A549 (cell line): ENCODE measurements at regions of chr9 and their contacts with region 1.

Region 1: DNA sequence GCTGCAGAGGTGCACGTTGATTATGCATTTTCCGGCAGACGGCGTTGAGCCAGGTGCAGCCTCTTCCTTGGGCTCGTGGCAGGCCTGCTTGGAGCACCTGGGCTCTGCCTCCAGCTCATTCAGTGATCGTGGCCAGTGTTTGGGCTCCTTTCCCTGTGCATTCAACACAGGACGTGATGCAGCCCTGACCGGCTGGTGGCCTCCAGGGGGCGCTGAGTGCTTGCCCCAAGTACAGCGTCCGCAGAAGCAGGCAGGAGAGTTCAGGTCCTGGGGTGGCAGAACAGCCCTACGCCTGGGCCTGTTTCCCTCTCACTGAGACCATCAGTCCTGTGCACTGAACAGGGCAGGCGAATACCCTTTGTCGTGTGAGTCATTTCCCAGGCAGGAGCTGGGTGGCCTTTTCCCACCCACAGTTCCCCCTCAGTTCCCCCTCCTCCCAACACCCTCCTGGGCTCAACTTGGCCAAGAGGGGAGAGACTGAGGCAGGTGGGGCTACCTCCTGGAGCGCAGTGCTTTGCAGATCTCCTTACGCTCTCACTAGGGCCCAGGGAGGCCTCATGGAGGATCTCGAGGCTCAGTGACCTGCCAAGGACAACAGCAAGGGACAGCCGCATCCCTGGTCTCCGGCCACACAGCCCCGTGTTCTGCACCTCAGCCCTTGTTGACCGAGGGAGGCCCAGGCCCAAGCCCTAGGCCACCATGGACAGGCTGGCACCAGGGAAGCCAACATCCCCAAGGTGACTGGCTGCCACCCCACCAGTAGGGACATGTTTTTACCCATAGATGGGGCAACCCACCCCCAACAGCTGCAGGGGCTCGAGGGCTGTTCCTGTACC is 52.9 kb downstream of the LRSAM1 start:
- DNase-seq: peak; percentile 48 to 89
- ATAC-seq: peak; percentile 69 to 87
- H3K4me3 ChIP-seq: no peak overlapping the region
- H3K27ac ChIP-seq: peak overlapping the region; percentile 26 to 79; a peak in 4 of 6 replicates
- H3K4me1 ChIP-seq: peaks cover 24% of the 10 kb centered on the region
- CTCF ChIP-seq: peak; percentile 84
- EP300 ChIP-seq: no peak
- POLR2A ChIP-seq: no peak
- RAD21 ChIP-seq: peak; percentile 94 to 96

Region 2: DNA sequence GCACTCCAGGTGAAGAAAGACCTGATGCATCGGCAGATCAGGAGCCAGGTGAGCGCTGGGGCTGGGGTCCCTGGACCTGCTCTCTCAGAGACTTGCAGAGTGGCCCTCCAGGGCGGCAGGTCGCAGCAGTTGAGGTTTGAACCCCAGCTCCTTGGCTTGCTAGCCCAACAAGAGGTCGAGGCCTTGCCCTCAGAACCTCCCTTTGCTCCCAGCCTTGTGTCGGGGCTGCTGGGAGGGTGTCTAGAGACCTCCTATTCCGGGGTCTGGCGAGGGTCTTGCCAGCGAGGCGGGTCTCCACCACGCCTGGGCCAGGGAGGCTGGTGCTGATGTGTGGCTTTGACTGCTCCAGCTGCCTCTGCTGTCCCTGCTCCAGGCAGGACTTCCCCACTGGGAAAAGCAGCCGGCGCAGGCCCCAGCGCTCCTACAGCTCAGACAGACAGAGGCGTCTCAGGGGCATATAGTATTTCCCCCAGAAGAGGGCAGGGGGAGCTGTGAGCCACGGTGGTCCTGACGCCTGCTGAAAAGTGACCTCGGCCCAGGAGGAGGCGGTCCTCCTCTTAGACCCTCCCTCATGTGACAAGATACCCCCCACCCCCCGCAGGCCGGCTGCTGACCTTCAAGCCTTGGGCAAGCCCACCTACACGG is 14.6 kb before region 1 on chr9:
- CTCF ChIA-PET with region 1: interaction called, 69 read pairs
- POLR2A ChIA-PET with region 1: no interaction called
- DNase-seq: no peak
- ATAC-seq: peak in 1 of 2 experiments; percentile 60; a peak in 3 of 6 replicates
- H3K4me3 ChIP-seq: no peak overlapping the region
- H3K27ac ChIP-seq: no peak overlapping the region
- H3K4me1 ChIP-seq: no peaks in the 10 kb centered on the region
- CTCF ChIP-seq: no peak
- EP300 ChIP-seq: no peak
- POLR2A ChIP-seq: no peak
- RAD21 ChIP-seq: no peak

Region 3: DNA sequence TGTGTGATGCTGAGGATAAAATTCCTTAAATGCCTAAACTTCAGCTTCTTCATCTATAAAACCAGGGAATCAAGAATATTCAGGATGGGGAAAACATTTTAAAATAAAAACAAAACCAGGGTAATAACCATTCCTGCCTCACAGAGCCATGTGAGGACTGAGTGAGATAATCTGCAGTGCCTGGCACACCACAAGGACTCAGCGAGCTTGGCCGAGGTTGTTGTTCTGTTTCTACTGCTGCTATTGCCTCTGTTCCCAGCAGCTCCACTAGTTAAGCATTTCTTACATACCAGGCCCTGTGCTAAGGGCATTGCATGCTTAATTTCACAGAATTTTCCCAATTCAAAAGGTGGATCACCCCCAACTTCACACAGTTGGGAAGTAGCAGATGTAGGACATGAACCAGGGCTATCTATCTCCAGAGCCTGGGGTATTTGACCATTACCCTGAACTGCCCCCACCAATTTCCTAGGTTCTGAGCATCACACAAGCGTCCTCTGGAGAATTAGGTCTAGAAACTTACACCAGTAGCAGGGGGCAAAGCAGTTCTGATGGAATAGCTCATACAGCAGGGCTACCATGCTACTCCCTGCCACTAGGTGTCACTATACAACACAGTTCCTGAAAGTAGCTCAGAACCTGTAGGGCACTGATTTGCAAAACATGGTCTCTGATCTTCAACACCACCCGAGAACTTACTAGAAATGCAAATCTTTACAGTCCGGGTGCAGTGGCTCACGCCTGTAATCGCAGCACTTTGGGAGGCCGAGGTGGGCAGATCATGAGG is 21.4 kb after region 1 on chr9:
- CTCF ChIA-PET with region 1: interaction called, 139 read pairs
- POLR2A ChIA-PET with region 1: no interaction called
- DNase-seq: peak in 1 of 2 experiments; percentile 71
- ATAC-seq: 0 out of 6 replicates have a peak, but pooled peaks of 1 of the 2 experiments have one; percentile 12
- H3K4me3 ChIP-seq: no peak overlapping the region
- H3K27ac ChIP-seq: peak overlapping the region in 1 of 2 experiments; percentile 77; a peak in 2 of 6 replicates
- H3K4me1 ChIP-seq: peaks cover 31% of the 10 kb centered on the region
- CTCF ChIP-seq: peak; percentile 37
- EP300 ChIP-seq: no peak
- POLR2A ChIP-seq: no peak
- RAD21 ChIP-seq: peak; percentile 36 to 60; a peak in 3 of 5 replicates

Region 4: GRCh38 chr9:127545196-127546124 is 41.3 kb after region 1 on chr9:
- CTCF ChIA-PET with region 1: interaction called, 80 read pairs
- POLR2A ChIA-PET with region 1: interaction called, 3 read pairs
- DNase-seq: peak; percentile 93 to 94
- ATAC-seq: peak; percentile 76 to 87
- H3K4me3 ChIP-seq: peak overlapping the region; percentile 11; the same call in 1 of the 3 replicates
- H3K27ac ChIP-seq: peak overlapping the region; percentile 94 to 96
- H3K4me1 ChIP-seq: peaks cover 91% of the 10 kb centered on the region
- CTCF ChIP-seq: no peak
- EP300 ChIP-seq: peak; percentile 44 to 67; a peak in 3 of 5 replicates
- POLR2A ChIP-seq: no peak
- RAD21 ChIP-seq: peak in 1 of 2 experiments; percentile 24; a peak in 4 of 5 replicates

Region 5: GRCh38 chr9:127555768-127556397 is 51.7 kb after region 1 on chr9:
- CTCF ChIA-PET with region 1: interaction called, 68 read pairs
- POLR2A ChIA-PET with region 1: no interaction called
- DNase-seq: peak; percentile 90 to 96
- ATAC-seq: peak; percentile 83 to 86
- H3K4me3 ChIP-seq: no peak overlapping the region
- H3K27ac ChIP-seq: peak overlapping the region; percentile 82 to 92
- H3K4me1 ChIP-seq: peaks cover 87% of the 10 kb centered on the region
- CTCF ChIP-seq: no peak
- EP300 ChIP-seq: no peak
- POLR2A ChIP-seq: no peak
- RAD21 ChIP-seq: 0 out of 5 replicates have a peak, but pooled peaks of 1 of the 2 experiments have one; percentile 9

Region 6: DNA sequence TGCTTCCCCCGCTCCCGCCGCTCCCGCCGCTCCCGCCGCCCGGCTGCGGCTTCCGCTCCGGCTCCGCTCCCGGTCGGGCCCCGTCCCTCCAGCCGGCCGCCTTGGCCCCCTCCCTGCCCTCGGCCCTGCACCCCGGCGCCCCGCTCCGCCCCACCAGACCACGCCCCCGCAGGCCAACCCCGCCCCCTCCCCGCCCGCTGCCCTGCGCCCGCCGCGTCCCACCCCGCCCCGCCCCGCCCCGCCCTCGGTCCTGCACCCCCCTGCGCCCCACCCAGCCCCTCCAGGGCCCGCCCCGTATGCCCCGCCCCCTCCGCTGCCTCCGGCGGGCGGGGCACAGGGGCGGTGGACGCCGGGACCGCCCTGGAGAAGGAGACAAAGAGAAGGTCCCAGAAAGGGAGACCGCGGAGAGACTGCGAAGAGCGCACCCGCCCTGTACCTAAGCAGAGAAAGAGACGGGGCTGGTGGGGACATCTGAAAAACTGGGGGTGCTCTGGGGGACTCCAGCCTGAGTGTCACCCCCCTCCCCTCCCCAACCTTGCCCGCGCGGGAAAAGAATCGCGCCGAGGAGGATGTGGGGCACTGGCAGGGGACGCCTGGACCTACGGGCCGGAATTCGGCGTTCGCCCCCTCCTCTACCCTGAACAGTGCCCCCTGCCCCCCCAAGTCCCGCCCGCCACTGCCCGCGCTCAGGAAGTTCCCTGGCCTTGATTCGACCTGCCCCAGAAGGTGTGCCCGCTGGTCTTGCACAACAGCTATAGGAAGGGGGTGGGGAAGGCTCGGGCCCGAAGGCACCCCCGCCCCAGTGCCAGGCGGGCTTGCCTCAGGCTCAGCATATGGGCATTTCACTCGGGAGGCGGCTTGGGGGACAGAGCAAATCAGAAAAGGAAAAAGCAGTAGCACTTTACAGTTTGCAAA is 65.1 kb after region 1 on chr9:
- CTCF ChIA-PET with region 1: interaction called, 821 read pairs
- POLR2A ChIA-PET with region 1: no interaction called
- DNase-seq: peak; percentile 73 to 78
- ATAC-seq: peak; percentile 66 to 72
- H3K4me3 ChIP-seq: peak overlapping the region; percentile 82
- H3K27ac ChIP-seq: peak overlapping the region; percentile 92 to 100
- H3K4me1 ChIP-seq: peaks cover 75% of the 10 kb centered on the region
- CTCF ChIP-seq: no peak
- EP300 ChIP-seq: no peak; a peak in 1 of 5 replicates
- POLR2A ChIP-seq: peak; percentile 32
- RAD21 ChIP-seq: no peak